HCT116 (cell line): ENCODE measurements at regions of chr19 and their contacts with region 1.

Region 1: DNA sequence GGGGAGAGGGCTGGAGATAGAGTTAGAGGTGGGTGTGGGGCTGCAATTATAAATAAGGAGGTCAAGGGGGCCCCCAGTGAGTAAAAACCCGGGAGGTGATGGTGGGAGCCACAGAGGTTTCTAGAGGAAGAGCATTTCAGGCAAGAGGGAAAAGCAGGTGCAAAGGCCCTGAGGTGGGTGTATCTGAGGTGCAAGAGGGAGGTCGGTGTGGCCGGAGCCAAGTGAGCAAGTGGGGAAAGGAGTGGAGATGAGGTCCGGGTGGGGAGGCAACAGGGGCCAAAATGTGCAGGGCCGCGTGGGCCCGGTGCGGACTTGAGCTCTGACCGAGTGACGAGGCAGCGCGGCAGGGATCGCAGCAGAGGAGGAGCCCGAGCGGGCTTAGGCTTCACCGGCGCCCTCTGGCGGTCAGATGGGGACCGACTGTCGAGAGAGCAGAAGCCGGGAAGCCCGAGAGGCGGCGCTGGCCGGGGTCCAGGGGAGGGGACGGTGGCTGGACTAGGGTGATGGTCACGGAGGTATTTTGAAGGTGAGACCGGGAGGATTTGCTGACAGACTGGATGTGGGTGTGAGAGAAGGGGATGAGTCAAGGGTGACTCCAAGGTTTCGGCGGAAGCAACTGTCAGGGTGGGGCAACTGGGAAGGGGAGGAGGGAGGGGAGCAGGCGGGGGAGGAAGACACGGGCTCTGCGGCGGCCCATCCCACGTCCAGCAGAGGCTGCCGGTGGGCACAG is 17.7 kb upstream of the SPACA4 start:
- DNase-seq: peak; percentile 88
- ATAC-seq: peak; percentile 84
- H3K4me3 ChIP-seq: peak overlapping the region; percentile 35 to 50
- H3K27ac ChIP-seq: no peak overlapping the region
- H3K4me1 ChIP-seq: peaks cover 10 to 28% of the 10 kb centered on the region in 2 experiments
- H3K27me3 ChIP-seq: no peaks in the 10 kb centered on the region
- CTCF ChIP-seq: peak; percentile 90 to 97 (median 93)
- POLR2A ChIP-seq: no peak
- RAD21 ChIP-seq: peak; percentile 68

Region 2: GRCh38 chr19:48333467-48334384 is 255.1 kb before region 1 on chr19:
- CTCF ChIA-PET with region 1: interaction called, 10 read pairs
- POLR2A ChIA-PET with region 1: no interaction called
- RAD21 ChIA-PET with region 1: interaction called in 1 of 2 experiments, 3 read pairs
- intact Hi-C with region 1: loop called (anchors 10 kb)
- DNase-seq: peak; percentile 90
- ATAC-seq: peak; percentile 84
- H3K4me3 ChIP-seq: peak overlapping the region; percentile 56 to 63
- H3K27ac ChIP-seq: peak overlapping the region; percentile 75
- H3K4me1 ChIP-seq: peaks cover 12 to 38% of the 10 kb centered on the region in 2 experiments
- H3K27me3 ChIP-seq: no peaks in the 10 kb centered on the region
- CTCF ChIP-seq: peak; percentile 74 to 95 (median 78)
- POLR2A ChIP-seq: peak; percentile 74
- RAD21 ChIP-seq: peak; percentile 97

Region 3: GRCh38 chr19:48452289-48453190 is 136.3 kb before region 1 on chr19:
- CTCF ChIA-PET with region 1: no interaction called
- POLR2A ChIA-PET with region 1: no interaction called
- RAD21 ChIA-PET with region 1: no interaction called
- intact Hi-C with region 1: no loop called
- DNase-seq: no peak
- ATAC-seq: peak; percentile 51; the same call in 1 of the 2 replicates
- H3K4me3 ChIP-seq: no peak overlapping the region
- H3K27ac ChIP-seq: no peak overlapping the region; the same call in 1 of the 2 replicates
- H3K4me1 ChIP-seq: no peaks in the 10 kb centered on the region; a peak in 1 of 4 replicates
- H3K27me3 ChIP-seq: no peaks in the 10 kb centered on the region
- CTCF ChIP-seq: no peak
- POLR2A ChIP-seq: no peak
- RAD21 ChIP-seq: no peak

Region 4: DNA sequence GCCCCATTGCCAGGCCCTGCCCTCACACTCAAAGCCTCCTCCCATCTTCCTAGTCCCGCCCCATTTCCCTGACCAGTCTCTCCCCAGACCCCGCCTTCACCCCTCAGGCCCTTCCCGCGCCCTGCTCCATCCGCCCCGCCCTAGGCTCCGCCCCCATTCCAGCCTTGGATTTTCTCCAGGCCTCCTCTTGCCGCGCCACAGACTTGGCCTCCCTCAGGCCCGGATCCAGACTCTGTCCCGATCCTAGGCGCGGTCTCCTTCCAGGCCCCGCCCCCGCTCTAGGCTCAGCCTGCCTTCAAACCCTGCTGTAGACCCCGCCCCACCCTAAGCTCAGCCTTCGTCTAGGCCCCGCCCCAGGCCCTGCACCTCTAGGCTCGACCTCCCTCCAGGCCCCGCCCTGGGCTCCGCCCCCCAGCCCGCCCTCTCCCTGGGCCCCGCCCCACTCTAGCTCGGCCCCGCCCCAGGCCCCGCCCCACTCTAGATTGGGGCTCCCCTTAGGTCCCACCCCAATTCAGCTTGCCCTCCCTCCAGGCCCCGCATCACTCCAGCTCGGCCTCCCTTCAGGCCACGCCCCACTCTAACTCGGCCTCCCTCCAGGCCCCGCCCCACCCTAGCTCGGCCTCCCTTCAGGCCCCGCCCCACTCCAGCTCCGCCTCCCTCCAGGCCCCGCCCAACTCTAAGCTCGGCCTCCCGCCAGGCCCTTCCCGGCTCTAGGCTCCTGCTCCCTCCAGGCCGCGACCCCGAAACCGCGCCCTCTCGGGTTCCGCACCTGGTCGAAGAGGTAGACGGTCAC is 95.7 kb before region 1 on chr19:
- CTCF ChIA-PET with region 1: interaction called, 65 read pairs
- POLR2A ChIA-PET with region 1: interaction called, 13 read pairs
- RAD21 ChIA-PET with region 1: interaction called, 6 to 9 read pairs
- intact Hi-C with region 1: no loop called
- DNase-seq: peak; percentile 98
- ATAC-seq: peak; percentile 78
- H3K4me3 ChIP-seq: peak overlapping the region; percentile 76 to 78
- H3K27ac ChIP-seq: peak overlapping the region; percentile 93
- H3K4me1 ChIP-seq: peaks cover 46 to 72% of the 10 kb centered on the region in 2 experiments
- H3K27me3 ChIP-seq: no peaks in the 10 kb centered on the region
- CTCF ChIP-seq: no peak
- POLR2A ChIP-seq: peak; percentile 47
- RAD21 ChIP-seq: no peak

Region 5: GRCh38 chr19:48510421-48511280 is 78.2 kb before region 1 on chr19:
- CTCF ChIA-PET with region 1: interaction called, 276 read pairs
- POLR2A ChIA-PET with region 1: interaction called, 11 read pairs
- RAD21 ChIA-PET with region 1: interaction called, 34 to 75 read pairs
- intact Hi-C with region 1: loop called (anchors 1 kb)
- DNase-seq: no peak
- ATAC-seq: peak; percentile 40
- H3K4me3 ChIP-seq: no peak overlapping the region
- H3K27ac ChIP-seq: no peak overlapping the region
- H3K4me1 ChIP-seq: peaks cover 0 to 19% of the 10 kb centered on the region in 2 experiments; a peak in 2 of 4 replicates
- H3K27me3 ChIP-seq: no peaks in the 10 kb centered on the region
- CTCF ChIP-seq: no peak
- POLR2A ChIP-seq: no peak
- RAD21 ChIP-seq: no peak

Region 6: GRCh38 chr19:48608798-48609263 is 20.0 kb after region 1 on chr19:
- CTCF ChIA-PET with region 1: interaction called, 12 read pairs
- POLR2A ChIA-PET with region 1: interaction called, 3 read pairs
- RAD21 ChIA-PET with region 1: interaction called in 1 of 2 experiments, 3 read pairs
- intact Hi-C with region 1: no loop called
- DNase-seq: peak; percentile 66
- ATAC-seq: peak; percentile 92
- H3K4me3 ChIP-seq: peak overlapping the region; percentile 22 to 50
- H3K27ac ChIP-seq: peak overlapping the region; percentile 10; the same call in 1 of the 2 replicates
- H3K4me1 ChIP-seq: peaks cover 5 to 13% of the 10 kb centered on the region in 2 experiments; a peak in 3 of 4 replicates
- H3K27me3 ChIP-seq: no peaks in the 10 kb centered on the region
- CTCF ChIP-seq: peak; percentile 77 to 80 (median 77)
- POLR2A ChIP-seq: no peak
- RAD21 ChIP-seq: peak; percentile 92